Activated T-helper 2 cell treated with anti-CD3 and anti-CD28 coated beads, Interferon-gamma antibody, Interleukin-2, Interleukin-4, amounts not matched to agents 10 μg/mL and 5 μg/mL and 100 μg/mL, durations not matched to agents 14 hours and 24 hours and 36 hours (primary cell): ENCODE measurements at regions of chr10 and their contacts with region 1.

Region 1: GRCh38 chr10:103859161-103860086 is 4.0 kb upstream of the SH3PXD2A start:
- DNase-seq: peak; percentile 37
- H3K4me3 Mint-ChIP-seq: no peak overlapping the region
- H3K27ac Mint-ChIP-seq: no peak overlapping the region
- H3K4me1 Mint-ChIP-seq: peaks cover 8% of the 10 kb centered on the region
- H3K27me3 Mint-ChIP-seq: peaks cover 41% of the 10 kb centered on the region

Region 2: DNA sequence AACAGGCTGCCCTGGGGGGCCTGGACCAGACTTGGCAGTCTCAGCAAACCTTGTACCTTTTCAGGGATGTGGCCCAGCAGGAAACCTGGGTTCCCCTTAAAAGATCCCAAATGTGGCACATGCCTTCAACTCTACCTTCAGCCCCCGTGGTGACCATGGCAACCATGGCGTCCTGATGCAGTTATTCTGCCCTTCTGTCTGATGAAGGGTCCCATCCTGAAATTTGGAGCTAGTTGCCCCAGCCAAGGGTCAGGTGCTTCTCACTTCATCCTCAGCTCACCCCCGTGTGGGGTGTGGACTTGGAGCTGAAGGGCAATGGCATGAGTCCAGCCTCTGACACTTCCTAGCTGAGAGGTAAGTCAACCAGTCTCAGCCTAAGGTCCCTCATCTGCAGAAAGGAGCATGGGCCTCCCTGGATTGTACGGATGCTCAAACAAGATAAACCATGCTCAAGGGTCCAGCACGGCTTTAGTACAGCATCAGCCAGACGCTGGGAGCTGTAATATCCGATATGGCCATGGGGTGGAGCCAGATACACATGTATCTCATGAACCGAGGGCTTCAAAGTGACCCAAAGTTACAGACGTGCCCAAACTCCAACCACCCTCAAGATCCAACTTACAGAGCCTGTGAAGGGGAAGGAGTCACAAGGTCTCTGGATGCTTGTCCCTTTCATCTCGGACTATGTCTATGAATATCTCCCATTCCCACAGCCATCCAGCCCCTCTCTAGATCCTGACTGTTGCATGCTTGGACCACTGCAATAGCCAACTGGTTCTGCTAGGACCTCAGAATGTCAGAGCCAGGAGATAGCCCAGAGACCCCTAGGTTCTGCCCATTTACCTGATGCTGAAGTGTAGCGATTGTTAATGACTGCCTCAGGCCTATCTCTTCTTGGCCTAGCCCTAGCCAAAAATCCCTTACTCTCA is 146.6 kb before region 1 on chr10:
- intact Hi-C with region 1: loop called (anchors 1 kb)
- DNase-seq: peak; percentile 69
- H3K4me3 Mint-ChIP-seq: no peak overlapping the region
- H3K27ac Mint-ChIP-seq: no peak overlapping the region
- H3K4me1 Mint-ChIP-seq: peaks cover 9% of the 10 kb centered on the region
- H3K27me3 Mint-ChIP-seq: no peaks in the 10 kb centered on the region

Region 3: GRCh38 chr10:103800789-103801540 is 58.5 kb before region 1 on chr10:
- intact Hi-C with region 1: loop called (anchors 5 kb)
- DNase-seq: peak; percentile 63
- H3K4me3 Mint-ChIP-seq: no peak overlapping the region
- H3K27ac Mint-ChIP-seq: no peak overlapping the region
- H3K4me1 Mint-ChIP-seq: peaks cover 36% of the 10 kb centered on the region
- H3K27me3 Mint-ChIP-seq: peaks cover 14% of the 10 kb centered on the region